GM12878 (cell line): ENCODE measurements at regions of chr1 and their contacts with region 1.

Region 1: DNA sequence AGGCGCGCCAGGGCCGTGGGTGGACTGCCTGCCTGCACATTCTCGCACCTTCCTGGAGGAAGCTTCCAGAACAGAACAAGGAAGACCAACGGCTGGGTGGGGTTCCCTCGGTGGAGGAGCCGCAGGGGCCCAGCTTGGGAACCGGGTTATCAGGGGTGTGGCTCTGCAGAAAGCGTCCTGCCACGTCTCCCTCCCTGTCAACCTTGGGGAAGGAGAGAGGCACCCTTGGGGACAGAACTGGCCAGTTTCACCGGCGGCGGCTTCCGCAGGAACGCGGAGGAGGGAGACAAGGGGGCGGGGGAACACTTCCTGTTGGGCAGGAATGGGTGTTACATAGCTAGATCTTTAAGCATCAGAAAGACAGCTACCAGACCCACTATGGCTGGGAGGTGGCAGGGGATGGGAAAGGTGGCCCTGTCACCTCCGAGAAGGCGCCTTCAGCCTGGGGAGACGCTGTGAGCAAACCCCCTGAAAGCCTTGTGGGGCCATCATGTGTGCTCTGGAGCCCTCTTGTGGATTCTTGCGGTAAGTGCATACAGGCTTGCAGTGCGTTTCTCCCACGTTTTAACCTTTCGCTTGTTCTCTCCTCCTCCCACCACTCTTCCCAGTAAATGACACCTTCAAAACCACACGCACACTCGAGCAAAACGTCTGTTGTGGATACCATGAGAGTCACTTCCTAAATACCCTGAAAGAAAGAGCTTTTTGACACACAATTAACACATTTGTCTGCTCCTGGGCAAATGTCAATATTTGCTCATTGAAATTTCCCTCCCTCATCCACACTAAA is 3.8 kb upstream of the PLEKHA6 start:
- DNase-seq: peak; percentile 52
- ATAC-seq: peak; percentile 80
- H3K4me3 ChIP-seq: peak overlapping the region; percentile 49
- H3K27ac ChIP-seq: no peak overlapping the region
- H3K4me1 ChIP-seq: peaks cover 11% of the 10 kb centered on the region
- H3K27me3 ChIP-seq: no peaks in the 10 kb centered on the region
- CTCF ChIP-seq: peak; percentile 93 to 97 (median 97); a peak in 5 of 6 replicates
- EP300 ChIP-seq: no peak
- POLR2A ChIP-seq: no peak
- RAD21 ChIP-seq: peak; percentile 88

Region 2: DNA sequence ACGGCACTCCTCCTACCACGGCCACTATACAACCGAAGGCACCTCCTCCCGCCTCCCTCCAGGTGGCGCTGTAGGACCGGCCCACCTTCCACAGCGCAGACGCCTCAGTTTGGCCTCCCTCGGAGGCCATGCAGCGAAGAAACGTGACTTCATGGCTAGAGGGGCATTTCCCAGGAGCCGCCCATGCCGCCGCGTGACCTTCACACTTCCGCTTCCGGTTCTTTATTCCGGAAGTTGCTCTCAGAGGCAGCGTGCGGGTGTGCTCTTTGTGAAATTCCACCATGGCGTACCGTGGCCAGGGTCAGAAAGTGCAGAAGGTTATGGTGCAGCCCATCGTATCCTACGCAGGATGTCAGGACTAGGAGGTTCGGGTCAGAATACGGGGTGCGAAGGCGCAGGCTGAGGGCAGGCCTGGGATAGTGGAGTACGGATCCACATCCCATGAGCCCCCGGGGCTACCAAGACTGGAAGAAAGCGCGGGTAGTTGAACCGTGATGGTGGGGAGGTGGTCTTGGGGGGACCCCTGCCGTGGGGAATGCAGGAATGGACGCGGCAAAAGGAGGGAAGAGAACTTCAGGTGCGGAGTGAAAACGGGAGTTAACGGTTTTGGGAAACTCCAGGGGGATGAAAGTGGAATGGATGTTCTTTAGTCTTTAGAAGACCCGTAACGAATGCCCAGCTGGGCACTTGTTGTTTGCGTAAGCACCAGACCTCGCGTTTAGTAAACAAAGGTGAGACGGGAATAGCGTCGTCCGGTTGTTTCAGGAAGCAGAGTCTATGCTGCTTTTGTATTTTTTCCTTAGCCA is 501.9 kb before region 1 on chr1 and contains the start of gene SNRPE:
- CTCF ChIA-PET with region 1: interaction called, 11 read pairs
- POLR2A ChIA-PET with region 1: no interaction called
- RAD21 ChIA-PET with region 1: interaction called, 3 read pairs
- SMC1A ChIA-PET with region 1: interaction called, 5 read pairs
- in situ Hi-C with region 1: loop called (anchors 10 kb)
- intact Hi-C with region 1: loop called (anchors 2 kb)
- DNase-seq: peak; percentile 92
- ATAC-seq: peak; percentile 97
- H3K4me3 ChIP-seq: peak within 1 kb of the TSS; percentile 80
- H3K27ac ChIP-seq: peak within 1 kb of the TSS; percentile 94
- H3K4me1 ChIP-seq: peaks cover 4% of the 10 kb centered on the region; the same call in 1 of the 2 replicates
- H3K27me3 ChIP-seq: no peaks in the 10 kb centered on the region
- CTCF ChIP-seq: peak; percentile 94 to 96 (median 94)
- EP300 ChIP-seq: no peak
- POLR2A ChIP-seq: peak; percentile 97
- RAD21 ChIP-seq: peak; percentile 89
- polyA plus RNA-seq, gene SNRPE: 1,331 to 1,384 TPM

Region 3: GRCh38 chr1:204171751-204172178 is 191.8 kb before region 1 on chr1:
- CTCF ChIA-PET with region 1: interaction called, 195 read pairs
- POLR2A ChIA-PET with region 1: no interaction called
- RAD21 ChIA-PET with region 1: interaction called, 12 read pairs
- SMC1A ChIA-PET with region 1: interaction called, 97 read pairs
- in situ Hi-C with region 1: loop called (anchors 5 kb)
- intact Hi-C with region 1: no loop called
- DNase-seq: no peak
- ATAC-seq: no peak
- H3K4me3 ChIP-seq: no peak overlapping the region
- H3K27ac ChIP-seq: no peak overlapping the region
- H3K4me1 ChIP-seq: no peaks in the 10 kb centered on the region
- H3K27me3 ChIP-seq: peaks cover 0 to 2% of the 10 kb centered on the region in 2 experiments; a peak in 1 of 4 replicates
- CTCF ChIP-seq: no peak
- EP300 ChIP-seq: no peak
- POLR2A ChIP-seq: no peak
- RAD21 ChIP-seq: no peak

Region 4: DNA sequence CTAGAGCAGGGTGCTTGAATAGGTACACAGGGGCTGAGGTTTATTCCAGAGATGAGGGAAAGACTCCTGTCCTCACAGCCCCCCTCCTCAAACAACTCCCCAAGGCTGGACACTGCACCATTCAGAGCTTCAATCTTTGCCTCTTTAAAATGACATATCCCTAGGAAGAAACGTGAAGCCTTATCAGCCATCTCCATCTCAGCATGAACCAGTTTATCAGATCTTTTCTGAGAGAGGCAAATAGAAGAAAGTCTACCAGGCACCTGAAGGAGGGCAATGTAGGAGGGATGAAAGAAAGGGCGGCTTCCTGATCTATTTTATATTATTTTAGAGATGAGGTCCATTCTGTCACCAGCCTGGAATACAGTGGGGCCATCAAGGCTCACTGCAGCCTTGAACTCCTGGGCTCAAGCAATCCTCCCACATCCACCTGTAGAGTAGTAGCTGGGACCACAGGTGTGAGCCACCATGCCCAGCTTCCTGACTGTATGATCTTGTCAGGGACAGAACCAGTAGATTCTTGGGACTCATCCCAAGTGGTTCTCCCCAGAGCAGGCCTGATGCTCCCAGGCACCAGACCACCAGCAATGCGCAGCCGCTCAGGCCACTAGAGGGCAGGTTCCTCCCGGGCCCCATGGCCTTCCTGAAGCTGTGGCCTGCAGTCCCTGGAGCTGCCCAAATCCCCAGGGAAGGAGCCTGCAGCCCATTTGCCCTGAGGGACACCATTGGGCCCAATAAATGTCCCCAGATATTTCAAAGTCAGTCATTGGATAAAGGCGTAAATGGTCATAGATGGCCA is 105.4 kb before region 1 on chr1:
- CTCF ChIA-PET with region 1: interaction called, 153 read pairs
- POLR2A ChIA-PET with region 1: no interaction called
- RAD21 ChIA-PET with region 1: interaction called, 57 read pairs
- SMC1A ChIA-PET with region 1: interaction called, 86 read pairs
- in situ Hi-C with region 1: no loop called
- intact Hi-C with region 1: loop called (anchors 1 kb)
- DNase-seq: no peak
- ATAC-seq: peak; percentile 84
- H3K4me3 ChIP-seq: no peak overlapping the region
- H3K27ac ChIP-seq: no peak overlapping the region
- H3K4me1 ChIP-seq: no peaks in the 10 kb centered on the region
- H3K27me3 ChIP-seq: peaks cover 2 to 6% of the 10 kb centered on the region in 2 experiments; a peak in 3 of 4 replicates
- CTCF ChIP-seq: peak; percentile 55 to 69 (median 63)
- EP300 ChIP-seq: no peak
- POLR2A ChIP-seq: no peak
- RAD21 ChIP-seq: peak; percentile 45

Region 5: GRCh38 chr1:204314171-204314895 is 49.2 kb before region 1 on chr1:
- CTCF ChIA-PET with region 1: interaction called, 10 read pairs
- POLR2A ChIA-PET with region 1: no interaction called
- RAD21 ChIA-PET with region 1: no interaction called
- SMC1A ChIA-PET with region 1: no interaction called
- in situ Hi-C with region 1: no loop called
- intact Hi-C with region 1: no loop called
- DNase-seq: no peak
- ATAC-seq: no peak
- H3K4me3 ChIP-seq: no peak overlapping the region
- H3K27ac ChIP-seq: no peak overlapping the region
- H3K4me1 ChIP-seq: no peaks in the 10 kb centered on the region
- H3K27me3 ChIP-seq: peaks cover 0 to 8% of the 10 kb centered on the region in 2 experiments
- CTCF ChIP-seq: no peak
- EP300 ChIP-seq: no peak
- POLR2A ChIP-seq: no peak
- RAD21 ChIP-seq: no peak

Region 6: DNA sequence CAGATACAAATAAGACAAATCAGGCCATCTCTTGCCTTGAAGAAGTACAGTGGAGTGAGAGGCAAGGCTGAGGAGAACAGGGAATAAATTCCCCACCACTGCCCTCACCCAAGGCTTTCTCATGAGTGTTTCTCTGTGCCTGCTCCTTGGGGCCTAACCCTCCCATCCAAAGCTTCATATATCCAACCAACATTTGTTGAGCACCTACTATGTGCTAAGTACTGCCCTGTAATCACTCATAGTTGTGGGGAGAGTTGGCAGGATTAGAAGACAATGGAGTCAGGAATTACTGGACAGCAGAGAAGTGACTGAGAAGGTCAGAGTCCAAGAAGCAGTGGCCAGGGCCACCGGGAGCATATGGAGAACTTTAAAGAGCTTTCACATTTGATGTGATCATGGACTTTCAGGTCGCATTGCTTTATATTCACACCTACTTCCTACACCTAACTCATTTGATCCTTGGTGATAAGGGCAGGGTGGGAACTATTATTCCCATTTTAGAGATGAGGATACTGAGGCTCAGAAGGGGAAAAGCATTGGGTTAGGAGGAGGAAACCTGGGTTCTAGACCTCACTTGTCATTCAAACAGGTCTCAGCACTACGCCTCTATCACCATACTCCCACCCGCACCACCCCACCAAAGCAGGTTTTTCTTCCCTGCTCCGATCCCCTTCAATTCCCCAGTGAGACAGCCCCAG is 10.2 kb before region 1 on chr1:
- CTCF ChIA-PET with region 1: interaction called, 18 read pairs
- POLR2A ChIA-PET with region 1: no interaction called
- RAD21 ChIA-PET with region 1: no interaction called
- SMC1A ChIA-PET with region 1: interaction called, 10 read pairs
- in situ Hi-C with region 1: no loop called
- intact Hi-C with region 1: no loop called
- DNase-seq: no peak
- ATAC-seq: no peak
- H3K4me3 ChIP-seq: no peak overlapping the region
- H3K27ac ChIP-seq: no peak overlapping the region
- H3K4me1 ChIP-seq: no peaks in the 10 kb centered on the region
- H3K27me3 ChIP-seq: peaks cover 0 to 4% of the 10 kb centered on the region in 2 experiments
- CTCF ChIP-seq: no peak
- EP300 ChIP-seq: no peak
- POLR2A ChIP-seq: no peak
- RAD21 ChIP-seq: no peak

Region 7: GRCh38 chr1:204506961-204507387 is 143.4 kb after region 1 on chr1:
- CTCF ChIA-PET with region 1: interaction called, 10 read pairs
- POLR2A ChIA-PET with region 1: no interaction called
- RAD21 ChIA-PET with region 1: interaction called, 10 read pairs
- SMC1A ChIA-PET with region 1: interaction called, 3 read pairs
- in situ Hi-C with region 1: no loop called
- intact Hi-C with region 1: no loop called
- DNase-seq: peak; percentile 97
- ATAC-seq: peak; percentile 83
- H3K4me3 ChIP-seq: peak overlapping the region; percentile 77
- H3K27ac ChIP-seq: peak overlapping the region; percentile 59
- H3K4me1 ChIP-seq: peaks cover 4% of the 10 kb centered on the region
- H3K27me3 ChIP-seq: no peaks in the 10 kb centered on the region
- CTCF ChIP-seq: no peak
- EP300 ChIP-seq: peak in 1 of 2 experiments; percentile 29; a peak in 1 of 4 replicates
- POLR2A ChIP-seq: peak; percentile 42; the same call in 1 of the 2 replicates
- RAD21 ChIP-seq: no peak